ENCODE measurements at regions of chr11 and their contacts with region 1.

Region 1: GRCh38 chr11:64304316-64305072 is 830 bp upstream of the ESRRA start:
- DNase-seq: peak; percentile 86
- CTCF ChIP-seq: peak; percentile 90

Region 2: DNA sequence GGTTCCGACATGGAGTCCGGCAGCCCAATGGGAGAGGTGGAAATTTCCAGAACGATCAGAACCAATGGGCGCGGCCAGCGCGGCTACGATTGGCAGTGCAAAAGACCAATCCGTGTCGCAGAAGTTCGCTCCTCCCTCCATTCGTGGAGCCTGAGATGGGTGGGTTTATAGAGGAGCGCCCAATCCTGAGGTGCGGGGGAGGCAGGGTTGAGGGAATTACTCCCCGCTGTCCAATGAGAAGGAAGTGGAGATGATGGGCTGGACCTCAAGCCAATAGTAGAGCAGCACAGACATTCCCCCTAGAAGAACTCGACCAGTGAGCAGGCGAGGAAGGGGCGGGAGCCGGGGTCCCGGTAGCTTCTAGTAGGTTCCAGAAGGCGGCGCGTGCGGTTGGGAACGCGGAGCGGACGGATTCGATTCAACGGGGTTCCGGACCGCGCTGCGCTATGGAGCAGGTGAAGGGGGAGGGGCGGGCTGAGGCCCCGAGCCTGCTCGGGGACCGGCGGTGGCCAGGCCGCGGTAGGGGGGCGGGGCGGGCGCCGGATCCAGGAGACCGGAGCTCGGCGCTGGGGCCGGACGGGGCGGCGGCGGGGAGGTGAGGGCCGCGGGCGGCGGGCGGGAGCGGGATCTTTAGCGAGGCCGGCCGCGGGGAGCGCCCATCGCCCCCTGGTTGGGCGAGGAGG is 118.5 kb before region 1 on chr11 and contains the start of gene STIP1:
- CTCF ChIA-PET with region 1: interaction called, 12 read pairs
- POLR2A ChIA-PET with region 1: interaction called, 3 read pairs
- DNase-seq: peak; percentile 97
- CTCF ChIP-seq: peak; percentile 22

Region 3: DNA sequence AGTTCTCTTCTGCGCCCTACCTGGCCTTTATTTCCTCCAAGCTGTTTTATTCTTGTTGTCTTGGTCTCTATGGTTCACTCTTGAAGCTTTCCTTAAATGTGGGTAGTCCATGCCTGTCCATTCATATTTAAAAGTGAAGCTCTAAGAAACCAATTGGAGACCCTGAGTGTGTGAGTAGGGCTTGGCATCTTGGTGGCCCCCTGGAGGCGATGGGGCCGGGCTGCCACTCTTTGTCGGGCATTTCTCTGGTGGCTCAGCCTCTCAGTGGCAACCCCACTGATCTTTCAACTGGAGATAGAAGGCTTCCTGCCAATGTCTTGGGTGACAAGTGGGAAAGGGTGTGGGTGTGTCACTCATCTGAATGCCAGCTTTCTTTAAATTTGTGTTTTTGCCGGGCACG is 87.6 kb before region 1 on chr11:
- CTCF ChIA-PET with region 1: interaction called, 24 read pairs
- POLR2A ChIA-PET with region 1: no interaction called
- DNase-seq: no peak
- CTCF ChIP-seq: no peak

Region 4: GRCh38 chr11:64253481-64253880 is 51.0 kb before region 1 on chr11:
- CTCF ChIA-PET with region 1: interaction called, 48 read pairs
- POLR2A ChIA-PET with region 1: no interaction called
- DNase-seq: no peak
- CTCF ChIP-seq: no peak

Region 5: DNA sequence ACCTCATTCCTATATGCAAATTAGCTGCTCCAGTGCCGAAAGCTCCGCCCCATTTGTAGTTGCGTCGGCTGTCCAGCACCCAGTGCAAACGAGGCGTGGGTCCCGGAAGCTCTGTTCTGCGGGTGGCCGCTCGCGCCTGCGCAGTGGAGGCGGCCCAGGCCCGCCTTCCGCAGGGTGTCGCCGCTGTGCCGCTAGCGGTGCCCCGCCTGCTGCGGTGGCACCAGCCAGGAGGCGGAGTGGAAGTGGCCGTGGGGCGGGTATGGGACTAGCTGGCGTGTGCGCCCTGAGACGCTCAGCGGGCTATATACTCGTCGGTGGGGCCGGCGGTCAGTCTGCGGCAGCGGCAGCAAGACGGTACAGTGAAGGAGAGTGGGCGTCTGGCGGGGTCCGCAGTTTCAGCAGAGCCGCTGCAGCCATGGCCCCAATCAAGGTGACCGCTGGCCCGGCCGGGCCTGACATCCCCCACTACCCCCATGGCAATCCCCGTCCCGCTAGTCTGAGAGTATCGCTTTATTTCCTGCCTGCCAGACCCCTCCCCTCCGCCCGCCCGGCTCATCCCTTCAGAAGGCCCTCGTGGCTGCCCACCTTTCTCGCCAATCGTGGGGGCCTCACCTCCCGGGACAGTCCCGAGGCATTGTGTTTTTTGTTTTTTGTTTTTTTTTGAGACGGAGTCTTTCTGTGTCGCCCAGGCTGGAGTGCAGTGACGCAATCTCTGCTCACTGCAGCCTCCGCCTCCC is 13.6 kb after region 1 on chr11 and contains the start of gene PRDX5:
- CTCF ChIA-PET with region 1: interaction called, 28 read pairs
- POLR2A ChIA-PET with region 1: interaction called, 18 read pairs
- DNase-seq: peak; percentile 97
- CTCF ChIP-seq: peak; percentile 63

Region 6: GRCh38 chr11:64348611-64349484 is 44.4 kb after region 1 on chr11:
- CTCF ChIA-PET with region 1: interaction called, 10 read pairs
- POLR2A ChIA-PET with region 1: no interaction called
- DNase-seq: no peak
- CTCF ChIP-seq: no peak

Region 7: GRCh38 chr11:64366751-64367428 is 62.4 kb after region 1 on chr11:
- CTCF ChIA-PET with region 1: no interaction called
- POLR2A ChIA-PET with region 1: no interaction called
- DNase-seq: no peak
- CTCF ChIP-seq: no peak

Region 8: GRCh38 chr11:65194564-65194963 is 890.1 kb after region 1 on chr11:
- CTCF ChIA-PET with region 1: no interaction called
- POLR2A ChIA-PET with region 1: no interaction called
- DNase-seq: no peak
- CTCF ChIP-seq: no peak

Measured in GM10248 (cell line).